Right ventricle myocardium superior (tissue), 1 donor: ENCODE measurements at regions of chr4 and their contacts with region 1.

Region 1: DNA sequence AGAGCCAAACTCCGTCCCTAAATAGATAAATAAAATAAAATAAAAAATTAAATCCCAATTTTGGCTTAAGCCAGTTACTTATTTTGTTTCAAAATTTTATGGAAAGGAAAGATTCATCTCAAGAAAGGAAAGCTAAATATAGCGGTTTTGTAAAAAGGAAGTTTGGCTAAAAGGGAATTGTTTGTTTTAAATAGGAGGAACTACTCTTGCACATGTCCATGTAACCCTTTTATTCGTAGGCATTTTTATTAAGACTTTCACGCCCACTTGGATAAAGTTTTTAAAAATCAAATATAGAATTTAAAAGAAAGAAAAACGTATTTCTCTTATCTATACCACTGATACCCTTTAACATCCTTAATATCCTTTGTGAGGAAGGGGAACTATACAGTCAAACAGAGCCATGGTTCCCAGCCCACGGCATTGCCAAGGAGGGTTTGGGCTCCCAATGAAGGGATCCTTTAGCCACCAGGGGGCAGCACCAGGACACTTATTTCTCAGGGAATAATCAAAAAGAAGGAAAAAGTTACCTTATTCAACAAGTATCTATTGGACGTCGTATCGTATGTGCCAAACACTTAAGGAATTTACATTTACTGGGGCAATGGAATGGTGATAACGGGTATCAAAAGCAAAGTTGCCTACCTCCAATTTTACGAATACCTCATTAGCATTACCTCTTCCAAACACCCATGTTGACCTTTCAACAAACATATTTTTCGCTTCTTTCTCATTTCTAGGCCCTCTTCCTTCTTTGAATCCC is 27.7 kb downstream of the CDKN2AIP start:
- DNase-seq: peak; percentile 90
- ATAC-seq: peak; percentile 94

Region 2: DNA sequence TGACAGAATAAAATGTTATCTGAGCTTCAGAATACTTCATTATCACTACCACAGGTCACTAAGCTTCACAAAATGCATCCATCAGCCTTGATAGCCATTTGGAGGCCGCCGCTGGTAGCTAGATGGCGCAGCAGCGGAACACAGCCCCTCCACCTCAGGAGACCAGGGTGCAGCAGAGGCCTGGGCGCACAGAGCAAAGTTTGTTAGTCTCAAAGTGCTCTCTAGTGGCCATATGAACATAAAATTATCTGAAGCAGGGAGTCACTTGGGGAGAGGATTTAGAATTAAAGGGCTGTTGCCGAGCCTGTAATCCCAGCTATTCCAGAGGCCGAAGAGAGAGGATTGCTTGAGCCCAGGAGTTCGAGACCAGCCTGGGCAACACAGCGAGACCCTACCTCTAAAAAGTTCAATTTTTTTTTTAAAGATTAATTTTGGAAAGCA is 546.8 kb before region 1 on chr4:
- intact Hi-C with region 1: no loop called
- DNase-seq: peak; percentile 77
- ATAC-seq: peak; percentile 91

Region 3: GRCh38 chr4:183321079-183321478 is 151.0 kb before region 1 on chr4:
- intact Hi-C with region 1: no loop called
- DNase-seq: no peak
- ATAC-seq: no peak

Region 4: GRCh38 chr4:183430317-183430993 is 41.7 kb before region 1 on chr4:
- intact Hi-C with region 1: no loop called
- DNase-seq: no peak
- ATAC-seq: no peak

Region 5: GRCh38 chr4:183588169-183588675 is 116.1 kb after region 1 on chr4:
- intact Hi-C with region 1: no loop called
- DNase-seq: no peak
- ATAC-seq: peak; percentile 86

Region 6: GRCh38 chr4:183607894-183608293 is 135.8 kb after region 1 on chr4:
- intact Hi-C with region 1: loop called (anchors 5 kb)
- DNase-seq: no peak
- ATAC-seq: no peak